Psoas muscle (tissue), 8 donors: ENCODE measurements at regions of chr4 and their contacts with region 1.

Region 1: GRCh38 chr4:107449611-107450369 is 270.2 kb downstream of the PAPSS1 start:
- DNase-seq: no peak
- ATAC-seq: no peak
- H3K4me3 ChIP-seq: no peak overlapping the region
- H3K27ac ChIP-seq: no peak overlapping the region
- H3K4me1 ChIP-seq: peaks cover 7% of the 10 kb centered on the region
- H3K27me3 ChIP-seq: no peaks in the 10 kb centered on the region
- CTCF ChIP-seq: no peak

Region 2: DNA sequence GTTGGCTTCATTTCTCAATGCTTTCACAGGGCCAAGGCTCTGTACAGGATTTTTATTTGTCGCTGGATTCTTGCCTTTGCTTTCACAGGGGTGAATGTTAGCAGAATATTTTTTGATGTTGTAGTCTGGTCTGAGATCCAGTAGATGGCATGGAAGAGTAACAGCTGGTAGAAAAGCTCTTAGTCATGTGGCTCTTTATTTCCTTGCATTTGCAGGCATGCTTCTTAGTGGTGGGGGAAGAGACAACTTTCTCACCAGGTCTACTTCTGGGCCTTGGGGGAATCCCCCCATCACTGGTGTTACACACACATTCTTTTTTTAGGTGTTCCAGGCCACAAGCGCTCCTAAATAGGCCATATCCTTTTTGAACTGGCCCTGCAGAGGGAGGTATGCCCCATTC is 355.5 kb before region 1 on chr4:
- intact Hi-C with region 1: no loop called
- DNase-seq: no peak
- ATAC-seq: peak; percentile 48 to 84 (median 64)
- H3K4me3 ChIP-seq: no peak overlapping the region
- H3K27ac ChIP-seq: no peak overlapping the region
- H3K4me1 ChIP-seq: peaks cover 13% of the 10 kb centered on the region
- H3K27me3 ChIP-seq: no peaks in the 10 kb centered on the region
- CTCF ChIP-seq: peak; percentile 42

Region 3: GRCh38 chr4:107408968-107409367 is 40.8 kb before region 1 on chr4:
- intact Hi-C with region 1: loop called in 1 of 2 experiments (anchors 1 kb)
- DNase-seq: no peak
- ATAC-seq: no peak
- H3K4me3 ChIP-seq: no peak overlapping the region
- H3K27ac ChIP-seq: no peak overlapping the region
- H3K4me1 ChIP-seq: no peaks in the 10 kb centered on the region
- H3K27me3 ChIP-seq: no peaks in the 10 kb centered on the region
- CTCF ChIP-seq: no peak

Region 4: GRCh38 chr4:107600436-107600835 is 150.6 kb after region 1 on chr4:
- intact Hi-C with region 1: no loop called
- DNase-seq: no peak
- ATAC-seq: no peak
- H3K4me3 ChIP-seq: no peak overlapping the region
- H3K27ac ChIP-seq: no peak overlapping the region
- H3K4me1 ChIP-seq: no peaks in the 10 kb centered on the region
- H3K27me3 ChIP-seq: no peaks in the 10 kb centered on the region
- CTCF ChIP-seq: no peak